ENCODE measurements at regions of chr3 and their contacts with region 1.

Region 1: GRCh38 chr3:192566706-192567290 is 160.5 kb downstream of the FGF12 start:
- DNase-seq: peak; percentile 54 to 96 (median 82)

Region 2: DNA sequence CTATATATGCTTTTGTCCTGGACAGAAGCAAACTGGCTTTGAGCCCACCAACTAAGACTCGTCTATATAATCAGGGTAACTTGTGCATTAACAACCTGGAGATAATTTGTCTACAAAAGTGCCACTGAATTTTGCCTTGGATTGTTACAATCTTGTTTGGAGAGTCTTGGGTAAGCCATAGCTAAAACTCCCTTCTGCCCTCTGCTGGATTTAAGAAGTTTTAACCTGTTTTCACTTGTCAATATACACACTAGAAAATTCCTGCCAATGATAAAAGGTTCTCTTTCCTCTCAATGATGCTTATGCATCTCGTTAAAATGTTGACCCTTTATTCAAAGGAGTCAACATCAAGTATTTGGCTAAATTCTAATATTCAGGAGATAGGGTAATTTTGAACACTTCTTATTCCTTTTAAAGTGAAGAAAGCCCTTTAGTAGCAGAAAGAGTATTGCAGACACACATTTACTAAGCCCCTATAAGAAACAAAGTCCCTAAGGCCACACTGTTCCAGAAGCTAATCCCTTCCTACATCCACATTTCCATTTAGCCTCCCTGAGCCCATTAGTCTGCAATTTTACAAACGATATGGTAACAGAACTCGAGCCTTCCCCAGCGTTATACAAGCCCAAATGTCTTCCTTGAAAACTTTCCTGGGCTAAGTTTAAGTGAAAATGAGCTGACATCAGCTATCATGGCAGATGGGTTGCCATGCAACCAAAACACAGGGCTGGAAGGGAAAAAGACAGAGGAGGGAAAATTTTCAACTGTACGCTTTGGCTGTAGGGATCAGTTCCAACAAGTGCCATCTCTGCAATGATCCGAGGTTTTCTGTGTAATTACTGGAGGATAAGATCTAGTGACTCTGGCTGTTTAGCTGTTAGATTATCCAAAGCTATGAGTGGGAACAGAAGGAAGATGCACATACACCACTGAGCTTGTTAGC is 236.4 kb after region 1 on chr3:
- intact Hi-C with region 1: loop called (anchors 1 kb)
- DNase-seq: peak in 1 of 10 donors; percentile 26

Region 3: GRCh38 chr3:193030276-193030675 is 463.5 kb after region 1 on chr3:
- intact Hi-C with region 1: loop called (anchors 10 kb)
- DNase-seq: no peak

Region 4: DNA sequence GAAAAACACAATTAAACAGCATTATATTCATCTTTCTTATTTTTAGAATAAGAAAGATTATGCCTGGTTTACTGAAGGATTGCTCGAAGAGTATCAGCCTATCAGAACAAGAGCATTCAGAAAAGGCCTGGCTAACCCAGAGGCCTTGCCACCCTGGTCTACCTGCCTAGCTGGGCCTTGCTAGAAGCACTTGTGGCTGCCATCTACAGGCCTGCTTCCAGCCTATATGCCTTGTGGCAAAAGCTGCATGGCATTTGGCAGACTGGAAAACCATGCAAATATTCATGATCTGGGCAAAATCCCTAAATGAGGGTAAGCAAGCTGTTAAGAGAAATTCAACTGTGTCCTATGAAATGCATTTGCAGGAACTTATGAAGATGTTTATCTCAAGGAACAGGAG is 997.2 kb after region 1 on chr3:
- intact Hi-C with region 1: loop called (anchors 10 kb)
- DNase-seq: peak in 3 of 10 donors; percentile 18 to 69 (median 21)

Measured in posterior cingulate gyrus (tissue), 11 donors.